Posterior vena cava (tissue), 2 donors: ENCODE measurements at regions of chr1 and their contacts with region 1.

Region 1: DNA sequence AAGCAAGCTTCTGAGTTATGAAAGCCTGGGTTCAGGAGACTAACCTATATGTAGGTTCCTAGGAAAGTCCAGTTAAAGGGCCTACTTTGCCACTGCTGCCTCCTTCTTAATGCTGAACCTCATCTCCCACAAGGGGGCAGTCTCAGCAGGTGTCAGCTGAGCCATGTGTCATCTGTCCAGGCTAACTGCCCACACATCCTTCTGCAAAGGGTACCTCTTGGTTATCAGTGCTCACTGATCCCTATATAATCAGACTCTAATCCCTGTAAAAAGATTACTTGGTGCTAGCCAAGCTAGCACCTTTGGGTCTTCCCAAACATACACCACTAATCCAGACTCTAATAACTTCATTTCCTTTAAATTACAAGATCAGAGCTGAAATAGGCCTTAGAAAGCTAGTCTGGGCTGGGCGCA is 9.0 kb downstream of the PRDX1 start:
- DNase-seq: no peak

Region 2: DNA sequence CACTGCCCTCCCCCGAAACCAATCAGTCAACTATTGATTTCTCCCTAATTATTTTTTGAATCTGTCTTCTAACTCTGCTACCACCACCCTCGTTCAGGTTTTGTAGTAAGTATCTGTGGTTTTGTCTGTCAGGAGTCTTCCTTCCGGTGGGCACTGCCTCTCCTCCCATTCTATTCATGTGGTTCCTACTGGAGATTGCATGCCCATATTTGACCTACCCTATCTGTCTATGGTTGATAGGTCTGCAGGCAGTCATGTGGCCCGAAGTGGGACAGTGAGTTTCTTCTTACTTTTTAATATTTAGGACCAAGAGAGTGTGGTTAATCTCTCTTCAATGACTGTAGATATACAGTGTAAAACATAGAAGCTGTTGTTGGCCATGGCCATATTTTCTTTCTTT is 272.9 kb after region 1 on chr1:
- intact Hi-C with region 1: no loop called
- DNase-seq: no peak

Region 3: GRCh38 chr1:46691997-46692790 is 1179.5 kb after region 1 on chr1:
- intact Hi-C with region 1: loop called in 1 of 2 experiments (anchors 10 kb)
- DNase-seq: no peak